ENCODE measurements at regions of chr1 and their contacts with region 1.

Region 1: GRCh38 chr1:46036894-46037839 is 95.3 kb downstream of the PIK3R3 start:
- DNase-seq: peak; percentile 96

Region 2: GRCh38 chr1:45762291-45762690 is 274.9 kb before region 1 on chr1:
- intact Hi-C with region 1: no loop called
- DNase-seq: no peak

Region 3: GRCh38 chr1:46132529-46133180 is 95.5 kb after region 1 on chr1 and contains the start of gene PIK3R3:
- intact Hi-C with region 1: loop called in 1 of 2 experiments (anchors 5 kb)
- DNase-seq: peak; percentile 99
- total RNA-seq, gene PIK3R3: 26.0 to 39.7 TPM

Region 4: DNA sequence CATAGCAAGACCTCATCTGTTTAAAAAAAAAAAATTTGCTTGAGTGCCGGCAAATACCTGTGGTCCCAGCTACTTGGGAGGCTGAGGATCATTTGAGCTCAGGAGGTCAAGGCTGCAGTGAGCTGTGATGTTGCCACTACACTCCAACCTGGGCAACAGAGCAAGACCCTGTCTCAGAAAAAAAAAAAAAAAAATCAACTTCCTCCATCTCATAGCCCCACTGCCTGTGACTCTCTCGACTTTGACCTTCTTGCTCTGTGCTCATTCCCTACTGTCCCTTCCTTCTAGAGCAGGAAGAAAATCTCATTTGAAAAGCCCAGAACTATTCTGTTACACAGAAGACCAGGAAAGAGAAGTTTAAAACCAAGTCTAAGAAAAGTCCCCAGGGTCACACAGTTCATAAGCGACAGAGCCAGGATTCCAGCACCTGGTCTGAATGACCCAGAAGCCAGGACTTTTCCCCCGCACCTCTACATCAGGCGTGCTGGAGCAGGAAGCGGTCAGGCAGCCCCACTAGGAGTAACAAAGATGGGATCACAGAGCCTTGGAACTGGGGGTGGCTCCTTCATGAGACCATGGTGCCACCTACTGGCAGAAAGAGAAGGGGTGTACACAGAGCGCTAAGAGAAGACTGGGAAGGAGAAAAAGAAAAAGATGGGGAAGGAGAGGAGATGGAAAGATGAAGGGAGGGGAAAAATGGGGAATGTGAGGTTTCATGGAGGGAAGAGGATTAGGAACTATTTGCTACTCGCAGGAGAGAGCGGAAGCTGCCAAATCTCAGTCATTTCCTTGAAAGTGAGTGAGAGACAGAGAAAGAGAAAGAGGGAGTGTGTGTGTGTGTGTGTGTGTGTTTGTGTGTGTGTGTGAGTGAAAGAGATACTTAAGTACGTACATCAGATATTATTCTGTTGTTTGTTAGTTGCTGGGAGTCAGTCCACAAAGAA is 142.2 kb after region 1 on chr1:
- intact Hi-C with region 1: loop called (anchors 2 kb)
- DNase-seq: no peak